Adrenal gland (tissue), 19 donors: ENCODE measurements at regions of chr12 and their contacts with region 1.

Region 1: GRCh38 chr12:15209782-15210181 is 11.4 kb downstream of the RERG start:
- DNase-seq: peak in 5 of 7 donors; percentile 47 to 62 (median 48)
- H3K4me3 ChIP-seq: no peak overlapping the region
- H3K27ac ChIP-seq: peak overlapping the region; percentile 47 to 88 (median 85)
- H3K4me1 ChIP-seq: peaks cover 30 to 51% of the 10 kb centered on the region in 2 donors
- H3K27me3 ChIP-seq: no peaks in the 10 kb centered on the region
- CTCF ChIP-seq: no peak
- POLR2A ChIP-seq: peak in 1 of 2 donors; percentile 11

Region 2: DNA sequence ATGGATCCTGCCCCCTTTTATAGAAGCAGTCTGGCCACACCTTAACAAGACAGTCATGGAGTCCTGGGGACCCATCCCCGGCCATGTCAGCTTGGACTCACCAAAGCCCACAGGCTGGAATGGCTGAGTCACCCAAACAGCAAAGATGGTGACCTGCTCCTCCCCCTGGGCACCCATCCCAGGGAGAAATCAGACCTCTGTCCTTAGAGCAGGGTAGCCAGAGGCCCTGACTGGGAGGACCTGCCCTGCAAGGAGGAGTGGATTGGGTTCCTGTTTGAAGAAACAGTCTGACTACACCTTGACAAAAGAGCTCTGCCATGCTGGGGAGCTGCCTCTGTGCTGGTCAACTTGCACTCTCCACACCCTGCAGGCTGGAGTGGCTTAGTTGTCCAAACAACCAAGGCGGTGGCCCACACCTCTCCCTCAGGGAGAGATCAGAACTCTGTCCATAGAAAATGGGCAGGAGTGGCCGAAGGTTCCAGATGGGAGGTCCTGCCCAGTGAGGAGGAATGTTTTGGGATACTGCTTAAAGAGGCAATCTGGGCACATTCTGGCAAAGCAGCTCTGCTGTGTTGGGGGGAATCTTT is 340.8 kb before region 1 on chr12:
- intact Hi-C with region 1: no loop called
- DNase-seq: peak in 3 of 7 donors; percentile 44 to 48 (median 44)
- H3K4me3 ChIP-seq: no peak overlapping the region
- H3K27ac ChIP-seq: no peak overlapping the region
- H3K4me1 ChIP-seq: no peaks in the 10 kb centered on the region
- H3K27me3 ChIP-seq: no peaks in the 10 kb centered on the region
- CTCF ChIP-seq: no peak
- POLR2A ChIP-seq: no peak

Region 3: GRCh38 chr12:15165012-15165659 is 44.6 kb before region 1 on chr12:
- intact Hi-C with region 1: loop called in 1 of 2 experiments (anchors 10 kb)
- DNase-seq: peak; percentile 42 to 76 (median 61)
- H3K4me3 ChIP-seq: peak overlapping the region in 2 of 4 donors; percentile 15 to 50
- H3K27ac ChIP-seq: peak overlapping the region; percentile 13 to 83 (median 82)
- H3K4me1 ChIP-seq: peaks cover 40 to 63% of the 10 kb centered on the region in 2 donors
- H3K27me3 ChIP-seq: no peaks in the 10 kb centered on the region
- CTCF ChIP-seq: no peak
- POLR2A ChIP-seq: peak in 1 of 2 donors; percentile 56